WTC11 (cell line): ENCODE measurements at regions of chr16 and their contacts with region 1.

Region 1: DNA sequence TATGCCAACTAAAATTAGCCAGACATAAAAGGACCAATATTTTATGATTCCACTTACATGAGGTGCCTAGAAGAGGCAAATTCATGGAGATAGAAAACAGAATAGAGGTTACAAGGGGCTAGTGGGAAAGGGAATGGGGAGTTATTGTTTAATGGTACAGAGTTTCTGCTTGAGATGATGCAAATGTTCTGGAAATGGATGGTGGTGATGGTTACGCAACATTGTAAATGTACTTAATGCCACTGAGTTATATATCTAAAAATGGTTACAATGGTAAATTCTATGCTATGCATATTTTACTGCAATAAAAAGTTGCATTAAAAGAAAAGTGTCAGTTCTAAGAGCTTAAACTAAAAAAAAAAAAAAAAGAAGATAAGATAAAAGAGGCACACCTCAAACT is 17.9 kb downstream of the MT1X start:
- DNase-seq: no peak
- ATAC-seq: no peak
- H3K4me3 Mint-ChIP-seq: no peak overlapping the region
- H3K27ac Mint-ChIP-seq: no peak overlapping the region
- H3K4me1 Mint-ChIP-seq: peaks cover 17% of the 10 kb centered on the region
- H3K27me3 Mint-ChIP-seq: peaks cover 2% of the 10 kb centered on the region
- CTCF ChIP-seq: no peak

Region 2: DNA sequence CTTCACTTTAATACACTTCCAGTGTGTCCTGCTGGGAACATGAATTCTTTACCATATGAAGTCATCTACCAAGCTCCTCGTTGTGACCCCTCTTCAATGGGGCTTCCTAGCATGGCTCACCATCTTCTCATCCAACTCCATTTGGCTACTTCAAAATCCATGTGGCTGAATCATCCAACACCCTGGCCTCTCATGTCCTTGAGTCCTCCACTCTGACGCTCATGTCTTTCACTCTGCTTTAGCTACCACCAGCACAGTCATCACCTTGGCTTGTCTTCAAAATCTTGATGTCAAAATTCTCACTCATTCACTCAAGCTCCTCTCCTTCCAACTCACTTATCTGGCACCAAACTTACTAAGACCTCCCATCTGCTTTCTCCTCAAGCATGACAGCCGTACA is 310.6 kb before region 1 on chr16:
- CTCF ChIA-PET with region 1: no interaction called
- POLR2A ChIA-PET with region 1: no interaction called
- DNase-seq: no peak
- ATAC-seq: no peak
- H3K4me3 Mint-ChIP-seq: no peak overlapping the region
- H3K27ac Mint-ChIP-seq: no peak overlapping the region
- H3K4me1 Mint-ChIP-seq: no peaks in the 10 kb centered on the region
- H3K27me3 Mint-ChIP-seq: no peaks in the 10 kb centered on the region
- CTCF ChIP-seq: no peak

Region 3: GRCh38 chr16:56513972-56514371 is 186.2 kb before region 1 on chr16:
- CTCF ChIA-PET with region 1: interaction called, 17 read pairs
- POLR2A ChIA-PET with region 1: no interaction called
- DNase-seq: no peak
- ATAC-seq: peak; percentile 86
- H3K4me3 Mint-ChIP-seq: no peak overlapping the region
- H3K27ac Mint-ChIP-seq: no peak overlapping the region
- H3K4me1 Mint-ChIP-seq: peaks cover 14% of the 10 kb centered on the region
- H3K27me3 Mint-ChIP-seq: no peaks in the 10 kb centered on the region
- CTCF ChIP-seq: no peak

Region 4: GRCh38 chr16:56583351-56584168 is 116.6 kb before region 1 on chr16:
- CTCF ChIA-PET with region 1: interaction called, 13 read pairs
- POLR2A ChIA-PET with region 1: no interaction called
- DNase-seq: no peak
- ATAC-seq: no peak
- H3K4me3 Mint-ChIP-seq: no peak overlapping the region
- H3K27ac Mint-ChIP-seq: no peak overlapping the region
- H3K4me1 Mint-ChIP-seq: peaks cover 7% of the 10 kb centered on the region; the same call in 1 of the 2 replicates
- H3K27me3 Mint-ChIP-seq: peaks cover 31% of the 10 kb centered on the region
- CTCF ChIP-seq: no peak

Region 5: DNA sequence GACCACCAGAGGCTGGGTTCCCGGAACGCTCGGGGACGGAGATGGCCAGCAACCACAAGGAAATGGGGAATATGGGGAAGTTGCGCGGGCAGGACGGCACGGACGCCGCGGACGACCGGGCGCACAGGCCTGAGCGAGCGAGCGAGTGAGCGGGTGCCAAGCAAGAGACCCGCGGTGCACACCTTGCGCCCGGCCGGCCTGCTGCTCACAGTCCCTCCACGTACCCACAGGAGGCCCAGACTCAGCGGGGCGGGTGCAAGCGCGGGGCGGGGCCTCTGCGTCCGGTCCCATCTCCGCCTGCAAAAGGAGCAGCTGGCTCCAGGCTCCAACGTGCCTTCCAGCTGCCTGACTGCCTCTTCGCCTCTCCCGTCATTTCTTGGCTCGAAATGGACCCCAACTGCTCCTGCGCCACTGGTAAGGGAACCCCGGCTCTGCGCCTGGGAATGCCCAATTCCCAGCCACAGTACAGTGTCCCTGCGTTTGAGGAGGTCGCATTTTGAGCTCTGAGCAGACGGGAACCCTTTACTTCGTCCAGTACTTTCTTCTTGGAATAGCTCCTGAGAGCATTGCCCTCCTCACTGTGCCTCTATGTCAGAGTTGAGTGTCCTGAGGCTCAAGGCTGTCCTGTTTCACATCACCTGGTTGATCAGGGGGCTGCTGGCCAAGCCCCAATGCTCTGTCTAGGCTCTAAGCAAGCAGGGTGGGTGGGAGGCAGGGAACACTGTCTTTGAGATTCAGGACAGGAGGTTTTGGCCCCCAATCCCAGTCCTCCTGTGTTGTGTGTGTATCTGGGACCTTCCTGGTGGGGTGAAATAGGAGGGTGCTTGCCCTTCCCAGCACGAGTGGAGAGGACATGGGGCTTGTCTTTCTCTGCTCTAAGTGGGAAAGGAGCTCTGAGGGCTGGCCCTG is 82.8 kb before region 1 on chr16:
- CTCF ChIA-PET with region 1: interaction called, 11 read pairs
- POLR2A ChIA-PET with region 1: no interaction called
- DNase-seq: peak; percentile 66
- ATAC-seq: peak; percentile 47
- H3K4me3 Mint-ChIP-seq: peak overlapping the region; percentile 78
- H3K27ac Mint-ChIP-seq: no peak overlapping the region
- H3K4me1 Mint-ChIP-seq: peaks cover 48% of the 10 kb centered on the region
- H3K27me3 Mint-ChIP-seq: peaks cover 95% of the 10 kb centered on the region
- CTCF ChIP-seq: no peak

Region 6: DNA sequence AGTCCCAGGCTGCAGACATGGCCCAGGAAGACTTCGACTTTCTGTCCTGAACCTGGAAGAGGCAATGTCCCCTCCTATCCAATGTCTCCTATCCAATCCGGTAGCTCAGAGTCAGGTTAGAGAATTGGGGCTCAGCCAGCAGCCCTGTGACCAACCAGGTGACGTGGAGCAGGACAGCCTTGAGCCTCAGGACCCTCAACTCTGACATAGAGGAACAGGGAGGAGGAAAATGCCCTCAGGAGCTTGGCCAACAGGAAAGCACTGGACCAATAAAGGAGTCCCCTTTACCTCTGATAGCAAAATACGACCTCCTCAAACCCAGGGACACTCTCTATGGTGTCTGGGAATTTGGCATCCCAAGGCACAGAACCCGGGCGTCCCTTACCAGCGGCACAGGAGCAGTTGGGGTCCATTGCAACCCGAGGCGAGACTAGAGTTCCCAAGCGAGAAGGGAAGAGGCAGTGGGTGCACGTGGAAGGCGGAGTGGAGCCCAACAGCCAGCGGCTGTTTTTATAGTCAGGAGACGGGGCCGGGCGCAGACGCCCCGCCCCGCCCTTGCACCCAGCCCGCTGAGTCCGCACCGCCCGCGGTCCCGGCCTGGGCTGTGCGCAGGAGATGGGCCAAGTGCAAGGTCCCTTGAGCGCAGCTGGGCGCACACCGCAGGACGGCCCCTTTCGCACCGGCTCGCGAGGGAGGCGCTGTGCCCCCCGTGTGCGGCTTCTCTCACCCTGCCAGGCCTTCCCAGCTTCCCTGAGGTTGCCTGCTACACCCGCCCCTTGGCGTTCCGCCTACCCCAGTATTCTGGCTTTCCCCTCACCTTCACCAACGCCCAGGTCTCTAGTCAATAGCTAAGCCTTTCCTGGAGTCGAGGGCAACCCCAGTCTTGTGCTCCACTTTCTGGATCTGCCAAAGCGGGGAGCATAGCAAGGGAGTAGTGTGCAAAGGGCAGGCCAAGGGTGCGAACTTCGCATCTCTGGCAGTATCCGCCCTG is 32.3 kb before region 1 on chr16 and contains the start of gene MT1G:
- CTCF ChIA-PET with region 1: interaction called, 46 read pairs
- POLR2A ChIA-PET with region 1: interaction called, 4 read pairs
- DNase-seq: peak; percentile 65
- ATAC-seq: peak; percentile 60
- H3K4me3 Mint-ChIP-seq: peak within 1 kb of the TSS; percentile 74
- H3K27ac Mint-ChIP-seq: no peak within 1 kb of the TSS
- H3K4me1 Mint-ChIP-seq: peaks cover 44% of the 10 kb centered on the region
- H3K27me3 Mint-ChIP-seq: peaks cover 100% of the 10 kb centered on the region
- CTCF ChIP-seq: no peak
- total RNA-seq, gene MT1G: 326 to 361 TPM (median 333 TPM) in 3 replicates

Region 7: GRCh38 chr16:56716761-56717160 is 16.6 kb after region 1 on chr16:
- CTCF ChIA-PET with region 1: interaction called, 18 read pairs
- POLR2A ChIA-PET with region 1: no interaction called
- DNase-seq: no peak
- ATAC-seq: no peak
- H3K4me3 Mint-ChIP-seq: no peak overlapping the region
- H3K27ac Mint-ChIP-seq: no peak overlapping the region
- H3K4me1 Mint-ChIP-seq: peaks cover 3% of the 10 kb centered on the region; the same call in 1 of the 2 replicates
- H3K27me3 Mint-ChIP-seq: peaks cover 15% of the 10 kb centered on the region
- CTCF ChIP-seq: no peak